Left cardiac atrium (tissue), 4 donors: ENCODE measurements at regions of chr11 and their contacts with region 1.

Region 1: DNA sequence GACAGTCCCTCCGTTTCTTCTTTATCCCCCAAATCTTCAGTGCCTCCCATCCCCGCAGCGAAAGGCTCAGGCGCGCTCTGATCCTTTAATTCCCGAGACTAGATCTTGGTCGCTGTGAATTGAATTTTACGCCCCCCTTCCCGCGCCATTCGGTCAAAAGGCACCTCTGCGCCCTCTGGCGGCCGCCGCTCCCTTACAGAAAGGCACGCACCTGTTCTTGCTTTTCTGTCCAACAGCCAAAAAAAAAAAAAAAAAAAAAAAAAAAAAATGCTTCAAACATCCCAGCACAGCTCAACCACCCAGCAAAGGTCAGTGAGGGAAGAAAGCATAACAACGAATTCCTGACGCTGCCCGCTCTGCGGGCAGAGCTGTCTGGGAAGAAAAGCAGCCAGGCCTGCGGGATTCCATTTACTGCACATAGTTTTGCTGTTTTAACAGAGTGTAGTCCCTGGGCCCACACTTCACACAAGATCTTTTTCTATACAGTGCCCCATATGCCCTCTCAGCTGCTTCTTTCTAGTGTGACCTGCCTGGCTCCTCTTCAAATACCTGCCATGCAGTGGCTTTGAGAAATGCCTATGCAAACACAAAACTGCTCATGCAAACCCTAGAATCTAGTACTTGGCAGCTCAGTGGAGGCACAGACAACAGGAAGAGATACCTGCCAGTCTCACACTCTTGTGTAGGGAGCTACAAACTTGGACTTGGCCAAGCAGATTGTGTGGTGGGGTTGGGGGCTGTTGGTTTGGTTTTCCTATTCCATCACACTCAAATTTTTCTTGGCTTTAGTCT is 1.3 kb upstream of the ESAM start:
- DNase-seq: peak; percentile 91
- ATAC-seq: peak; percentile 15 to 27

Region 2: DNA sequence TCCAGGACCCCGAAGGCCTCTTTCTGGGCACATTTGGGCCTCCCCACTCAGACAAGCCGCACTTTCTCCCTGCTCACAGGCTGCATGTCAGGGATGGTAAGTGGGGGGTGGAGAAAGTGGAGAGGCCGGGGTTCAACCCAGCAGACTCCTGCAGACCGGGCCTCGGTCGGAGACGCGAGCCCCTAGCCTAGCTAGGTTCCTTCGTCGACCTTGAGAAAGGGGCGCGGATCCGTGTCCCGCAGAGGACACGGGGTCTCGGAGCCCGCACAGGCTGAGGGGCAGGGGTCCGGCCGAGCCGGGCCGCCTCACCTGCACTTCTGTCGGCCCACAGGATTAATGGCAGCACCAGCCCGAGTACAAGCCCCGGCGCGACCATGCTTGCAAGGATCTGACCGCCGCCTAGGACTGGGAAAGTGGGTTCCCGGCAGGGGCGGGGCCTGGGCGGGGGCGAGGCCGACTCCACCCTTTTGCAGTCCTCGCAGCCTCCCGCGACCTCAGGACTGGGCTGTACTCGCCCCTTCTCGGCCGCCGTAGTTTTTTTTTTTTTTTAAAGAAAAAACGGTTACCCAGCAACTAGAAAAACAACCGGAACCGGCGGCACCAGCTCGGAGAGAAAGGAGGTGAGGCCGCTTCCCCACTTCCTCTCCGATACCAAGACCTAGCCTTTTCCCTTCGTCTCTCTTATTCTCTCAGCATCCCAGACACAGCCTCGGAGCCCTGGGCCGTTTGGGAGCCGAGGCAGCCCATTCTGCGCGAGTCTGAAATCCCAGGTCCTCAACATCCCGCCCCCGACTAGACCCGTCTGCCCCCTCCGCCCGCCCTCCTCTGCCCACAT is 89.8 kb before region 1 on chr11 and contains the starts of genes SIAE and SPA17:
- intact Hi-C with region 1: loop called (anchors 1 to 5 kb)
- DNase-seq: peak; percentile 95
- ATAC-seq: peak; percentile 99
- total RNA-seq, gene SIAE: 40.4 to 41.0 TPM
- total RNA-seq, gene SPA17: 3.5 to 4.0 TPM